Head of caudate nucleus (tissue), 42 donors: ENCODE measurements at regions of chr6 and their contacts with region 1.

Region 1: GRCh38 chr6:110537208-110538123 is 61.1 kb upstream of the SLC22A16 start:
- DNase-seq: peak in 8 of 42 donors; percentile 20 to 72 (median 46)

Region 2: DNA sequence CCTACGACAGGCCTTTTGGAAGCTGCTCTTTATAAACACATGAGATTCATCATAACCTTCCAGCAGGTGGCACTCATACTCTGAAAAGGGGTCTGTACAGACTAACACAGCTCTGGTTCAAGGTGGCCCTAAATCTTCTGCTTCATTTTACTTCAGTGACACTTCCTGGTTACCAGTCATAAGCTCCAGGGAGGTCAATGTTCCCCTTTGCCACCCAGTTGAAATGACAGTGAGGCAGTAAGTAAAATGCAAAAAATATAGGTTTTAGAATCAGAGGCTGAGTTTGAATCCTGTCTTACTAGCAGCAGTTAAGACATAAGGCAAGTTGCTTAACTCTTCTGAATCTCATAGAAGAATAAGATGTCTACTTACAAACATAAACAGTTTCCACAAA is 145.0 kb after region 1 on chr6:
- intact Hi-C with region 1: loop called (anchors 10 kb)
- DNase-seq: peak in 31 of 42 donors; percentile 22 to 90 (median 71)

Region 3: GRCh38 chr6:110949679-110950285 is 412.3 kb after region 1 on chr6:
- intact Hi-C with region 1: loop called (anchors 5 kb)
- DNase-seq: no peak

Region 4: DNA sequence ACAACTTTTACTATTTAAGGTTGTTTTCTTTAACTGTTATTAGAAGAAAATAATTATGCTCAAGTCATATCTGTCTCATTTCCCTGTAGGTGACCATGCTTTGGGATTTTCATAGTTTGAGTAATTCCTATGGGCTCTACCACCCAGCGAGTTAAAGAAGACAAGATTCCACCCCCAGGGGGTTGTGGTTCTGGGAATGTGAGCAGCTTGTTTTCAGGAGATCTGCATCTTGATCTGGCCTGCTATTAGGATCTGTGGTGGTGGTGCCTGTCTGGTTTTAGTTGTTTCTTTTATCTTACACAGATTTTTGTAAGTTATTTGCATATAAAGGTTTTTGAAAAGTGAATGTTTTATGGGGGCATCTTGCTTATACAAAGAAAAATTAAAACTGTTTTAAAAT is 965.7 kb after region 1 on chr6:
- intact Hi-C with region 1: no loop called
- DNase-seq: no peak